Activated T-helper 1 cell treated with anti-CD3 and anti-CD28 coated beads, Interleukin-12 subunit alpha, Interleukin-12 subunit beta, Interleukin-2, Interleukin-4 antibody, amounts not matched to agents 30 ng/mL and 10 ng/mL and 1 ng/mL, durations not matched to agents 14 hours and 24 hours and 36 hours (primary cell): ENCODE measurements at regions of chr4 and their contacts with region 1.

Region 1: DNA sequence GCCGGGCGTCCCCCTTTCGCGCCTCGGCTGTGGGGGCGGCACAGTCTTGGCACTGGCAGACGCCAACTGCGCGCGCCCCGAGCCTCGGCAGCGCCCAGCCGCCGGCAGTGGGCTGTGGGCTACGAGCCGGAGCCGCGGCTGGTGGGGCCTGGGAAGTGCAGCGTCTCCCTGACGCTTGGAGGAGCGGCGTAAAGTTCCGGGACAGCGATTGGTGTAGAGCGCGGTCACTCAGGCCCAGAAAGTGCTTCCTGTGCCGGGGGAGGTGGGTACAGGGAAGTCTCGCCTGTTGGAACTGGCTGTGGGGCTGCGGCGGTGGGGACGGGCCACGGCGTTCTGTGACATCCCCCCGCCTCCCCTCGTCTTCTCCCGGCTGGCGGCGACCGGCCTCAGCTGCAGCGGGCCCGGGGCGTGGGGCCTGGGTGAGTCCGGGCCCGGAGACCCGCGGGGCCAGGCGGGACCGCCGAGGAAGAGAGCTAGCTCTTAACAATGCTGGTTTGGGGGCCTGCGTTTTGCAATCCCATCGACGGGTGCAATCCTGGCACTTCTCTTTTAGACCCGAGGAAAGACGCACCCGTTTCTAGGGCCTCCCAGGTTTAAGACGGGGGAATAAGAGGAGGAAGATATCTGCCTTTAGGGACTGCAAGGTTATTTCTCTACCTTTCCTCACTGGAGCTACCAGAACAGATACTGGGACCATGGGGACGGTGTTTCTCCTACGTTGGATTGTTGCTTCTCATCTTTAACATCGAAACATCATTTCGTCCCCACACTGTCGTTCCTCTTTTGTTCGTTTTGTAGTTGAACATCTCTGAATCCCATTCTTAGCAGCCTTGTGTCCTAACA is at the starts of genes RWDD4 and TRAPPC11:
- DNase-seq: peak; percentile 95
- H3K4me3 Mint-ChIP-seq: peak within 1 kb of the TSS; percentile 100
- H3K27ac Mint-ChIP-seq: peak within 1 kb of the TSS; percentile 96
- H3K4me1 Mint-ChIP-seq: peaks cover 32% of the 10 kb centered on the region
- H3K27me3 Mint-ChIP-seq: no peaks in the 10 kb centered on the region
- total RNA-seq, gene RWDD4: 23.9 and 24.2 TPM in 2 replicates
- total RNA-seq, gene TRAPPC11: 23.0 and 33.7 TPM in 2 replicates

Region 2: GRCh38 chr4:182917182-182918043 is 741.8 kb before region 1 on chr4 and contains the start of gene DCTD:
- intact Hi-C with region 1: loop called (anchors 10 kb)
- DNase-seq: peak; percentile 78
- H3K4me3 Mint-ChIP-seq: peak within 1 kb of the TSS; percentile 92
- H3K27ac Mint-ChIP-seq: peak within 1 kb of the TSS; percentile 97
- H3K4me1 Mint-ChIP-seq: peaks cover 50% of the 10 kb centered on the region
- H3K27me3 Mint-ChIP-seq: peaks cover 10% of the 10 kb centered on the region
- total RNA-seq, gene DCTD: 122 and 131 TPM in 2 replicates

Region 3: DNA sequence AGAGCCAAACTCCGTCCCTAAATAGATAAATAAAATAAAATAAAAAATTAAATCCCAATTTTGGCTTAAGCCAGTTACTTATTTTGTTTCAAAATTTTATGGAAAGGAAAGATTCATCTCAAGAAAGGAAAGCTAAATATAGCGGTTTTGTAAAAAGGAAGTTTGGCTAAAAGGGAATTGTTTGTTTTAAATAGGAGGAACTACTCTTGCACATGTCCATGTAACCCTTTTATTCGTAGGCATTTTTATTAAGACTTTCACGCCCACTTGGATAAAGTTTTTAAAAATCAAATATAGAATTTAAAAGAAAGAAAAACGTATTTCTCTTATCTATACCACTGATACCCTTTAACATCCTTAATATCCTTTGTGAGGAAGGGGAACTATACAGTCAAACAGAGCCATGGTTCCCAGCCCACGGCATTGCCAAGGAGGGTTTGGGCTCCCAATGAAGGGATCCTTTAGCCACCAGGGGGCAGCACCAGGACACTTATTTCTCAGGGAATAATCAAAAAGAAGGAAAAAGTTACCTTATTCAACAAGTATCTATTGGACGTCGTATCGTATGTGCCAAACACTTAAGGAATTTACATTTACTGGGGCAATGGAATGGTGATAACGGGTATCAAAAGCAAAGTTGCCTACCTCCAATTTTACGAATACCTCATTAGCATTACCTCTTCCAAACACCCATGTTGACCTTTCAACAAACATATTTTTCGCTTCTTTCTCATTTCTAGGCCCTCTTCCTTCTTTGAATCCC is 187.1 kb before region 1 on chr4:
- intact Hi-C with region 1: loop called (anchors 10 kb)
- DNase-seq: peak; percentile 56
- H3K4me3 Mint-ChIP-seq: no peak overlapping the region
- H3K27ac Mint-ChIP-seq: no peak overlapping the region
- H3K4me1 Mint-ChIP-seq: peaks cover 6% of the 10 kb centered on the region
- H3K27me3 Mint-ChIP-seq: peaks cover 5% of the 10 kb centered on the region

Region 4: GRCh38 chr4:183636923-183637322 is 22.3 kb before region 1 on chr4:
- intact Hi-C with region 1: loop called (anchors 1 kb)
- DNase-seq: no peak
- H3K4me3 Mint-ChIP-seq: no peak overlapping the region
- H3K27ac Mint-ChIP-seq: no peak overlapping the region
- H3K4me1 Mint-ChIP-seq: peaks cover 20% of the 10 kb centered on the region
- H3K27me3 Mint-ChIP-seq: peaks cover 1% of the 10 kb centered on the region

Region 5: DNA sequence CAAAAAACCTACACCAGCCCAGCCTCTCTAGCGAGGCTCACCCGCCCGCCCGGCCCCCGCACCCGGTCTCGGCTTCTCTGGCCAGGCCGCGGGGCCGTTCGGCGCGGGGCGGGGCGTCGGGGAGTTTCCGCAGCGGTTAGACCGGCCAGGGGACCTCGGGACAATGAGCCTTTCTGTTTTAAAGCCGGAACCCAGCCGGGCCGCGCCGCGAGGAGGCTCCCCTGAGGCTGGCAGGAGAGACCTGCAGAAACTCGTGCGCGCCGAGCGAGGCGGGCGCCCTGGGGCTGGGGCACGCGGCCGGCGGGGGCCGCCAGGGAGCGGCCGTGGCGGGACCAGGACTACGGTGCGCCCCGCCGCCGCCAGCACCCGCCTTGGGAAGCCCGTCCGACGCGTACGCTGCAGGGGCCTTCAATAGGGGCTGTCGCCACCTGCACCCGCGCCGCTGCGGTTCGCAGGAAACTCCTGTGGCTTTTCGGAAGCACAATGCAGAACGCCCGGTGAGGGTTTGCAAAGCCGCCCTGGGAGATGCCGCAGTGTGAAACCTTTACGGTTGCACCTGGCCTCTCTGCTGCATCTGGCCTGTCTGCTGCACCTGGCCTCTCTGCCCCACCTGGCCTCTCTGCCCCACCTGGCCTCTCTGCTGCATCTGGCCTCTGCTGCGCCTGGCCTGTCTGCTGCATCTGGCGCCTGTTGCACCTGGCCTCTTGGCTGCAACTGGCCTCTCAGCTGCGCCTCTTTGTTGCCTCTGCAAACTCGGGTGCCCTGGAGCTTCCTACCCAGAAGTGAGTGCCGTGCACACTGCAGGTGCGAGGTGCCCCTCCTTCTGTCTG is 63.7 kb after region 1 on chr4:
- intact Hi-C with region 1: loop called (anchors 2 kb)
- DNase-seq: peak; percentile 44
- H3K4me3 Mint-ChIP-seq: peak overlapping the region; percentile 84
- H3K27ac Mint-ChIP-seq: no peak overlapping the region
- H3K4me1 Mint-ChIP-seq: peaks cover 15% of the 10 kb centered on the region
- H3K27me3 Mint-ChIP-seq: peaks cover 34% of the 10 kb centered on the region

Region 6: GRCh38 chr4:184232206-184232820 is 573.1 kb after region 1 on chr4:
- intact Hi-C with region 1: loop called (anchors 5 kb)
- DNase-seq: no peak
- H3K4me3 Mint-ChIP-seq: no peak overlapping the region
- H3K27ac Mint-ChIP-seq: no peak overlapping the region
- H3K4me1 Mint-ChIP-seq: peaks cover 93% of the 10 kb centered on the region
- H3K27me3 Mint-ChIP-seq: no peaks in the 10 kb centered on the region

Region 7: GRCh38 chr4:184250795-184251669 is 591.8 kb after region 1 on chr4:
- intact Hi-C with region 1: loop called (anchors 5 kb)
- DNase-seq: no peak
- H3K4me3 Mint-ChIP-seq: peak overlapping the region; percentile 27
- H3K27ac Mint-ChIP-seq: peak overlapping the region; percentile 94
- H3K4me1 Mint-ChIP-seq: peaks cover 38% of the 10 kb centered on the region
- H3K27me3 Mint-ChIP-seq: peaks cover 1% of the 10 kb centered on the region